Activated T-helper 1 cell treated with anti-CD3 and anti-CD28 coated beads, Interleukin-12 subunit alpha, Interleukin-12 subunit beta, Interleukin-2, Interleukin-4 antibody, amounts not matched to agents 30 ng/mL and 10 ng/mL and 1 ng/mL, durations not matched to agents 14 hours and 24 hours and 36 hours (primary cell): ENCODE measurements at regions of chr19 and their contacts with region 1.

Region 1: GRCh38 chr19:17747205-17748098 is 3.8 kb upstream of the FCHO1 start:
- DNase-seq: peak; percentile 93
- H3K4me3 Mint-ChIP-seq: peak overlapping the region; percentile 97
- H3K27ac Mint-ChIP-seq: peak overlapping the region; percentile 71
- H3K4me1 Mint-ChIP-seq: peaks cover 49% of the 10 kb centered on the region
- H3K27me3 Mint-ChIP-seq: no peaks in the 10 kb centered on the region

Region 2: GRCh38 chr19:17511724-17512573 is 235.5 kb before region 1 on chr19:
- intact Hi-C with region 1: loop called (anchors 1 kb)
- DNase-seq: peak; percentile 75
- H3K4me3 Mint-ChIP-seq: peak overlapping the region; percentile 99
- H3K27ac Mint-ChIP-seq: peak overlapping the region; percentile 79
- H3K4me1 Mint-ChIP-seq: peaks cover 28% of the 10 kb centered on the region
- H3K27me3 Mint-ChIP-seq: no peaks in the 10 kb centered on the region

Region 3: GRCh38 chr19:17555480-17555928 is 191.9 kb before region 1 on chr19 and contains the start of gene COLGALT1:
- intact Hi-C with region 1: loop called (anchors 1 kb)
- DNase-seq: peak; percentile 97
- H3K4me3 Mint-ChIP-seq: peak within 1 kb of the TSS; percentile 86
- H3K27ac Mint-ChIP-seq: peak within 1 kb of the TSS; percentile 70
- H3K4me1 Mint-ChIP-seq: peaks cover 15% of the 10 kb centered on the region
- H3K27me3 Mint-ChIP-seq: no peaks in the 10 kb centered on the region
- total RNA-seq, gene COLGALT1: 115 and 117 TPM in 2 replicates

Region 4: DNA sequence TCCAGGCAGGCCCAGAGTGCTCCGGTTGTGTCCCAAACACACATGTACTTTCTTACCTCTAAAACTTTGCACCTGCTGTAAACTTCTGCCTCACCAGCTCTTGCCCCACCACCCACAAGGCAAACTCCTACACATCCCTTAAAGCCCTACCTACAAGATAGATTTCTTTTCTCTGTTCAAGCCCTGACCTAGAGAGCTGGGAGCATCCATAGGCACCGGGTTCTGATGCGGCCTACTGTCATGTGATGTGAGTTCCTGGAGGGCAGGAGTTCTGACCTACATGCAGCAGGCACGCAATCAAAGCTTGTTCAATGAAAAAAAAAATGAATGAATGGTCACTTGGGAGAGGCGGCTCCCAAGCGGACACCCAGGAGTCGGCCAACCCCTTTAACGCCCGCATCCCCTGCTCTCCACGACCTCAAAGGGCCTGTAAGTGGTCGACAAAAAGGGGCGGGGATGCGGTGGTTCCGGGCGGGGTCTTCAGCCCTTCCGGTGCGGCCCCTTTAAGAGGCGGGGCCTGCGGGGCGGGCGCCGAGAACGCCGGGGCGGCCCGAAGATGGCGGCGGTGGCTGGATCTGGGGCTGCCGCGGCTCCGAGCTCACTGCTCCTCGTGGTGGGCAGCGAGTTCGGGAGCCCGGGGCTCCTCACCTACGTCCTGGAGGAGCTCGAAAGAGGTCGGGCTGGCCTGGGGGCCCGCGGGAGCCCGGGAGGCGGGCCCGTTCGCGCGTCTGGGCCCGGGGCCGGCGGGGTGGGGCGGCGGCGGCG is 28.3 kb before region 1 on chr19 and contains the start of gene MAP1S:
- intact Hi-C with region 1: loop called (anchors 1 kb)
- DNase-seq: peak; percentile 66
- H3K4me3 Mint-ChIP-seq: peak within 1 kb of the TSS; percentile 91
- H3K27ac Mint-ChIP-seq: peak within 1 kb of the TSS; percentile 89
- H3K4me1 Mint-ChIP-seq: peaks cover 43% of the 10 kb centered on the region
- H3K27me3 Mint-ChIP-seq: peaks cover 2% of the 10 kb centered on the region
- total RNA-seq, gene MAP1S: 81.7 and 83.7 TPM in 2 replicates

Region 5: GRCh38 chr19:17932485-17933338 is 185.3 kb after region 1 on chr19 and contains the start of gene CCDC124:
- intact Hi-C with region 1: loop called (anchors 1 kb)
- DNase-seq: peak; percentile 89
- H3K4me3 Mint-ChIP-seq: peak within 1 kb of the TSS; percentile 87
- H3K27ac Mint-ChIP-seq: peak within 1 kb of the TSS; percentile 82
- H3K4me1 Mint-ChIP-seq: peaks cover 21% of the 10 kb centered on the region
- H3K27me3 Mint-ChIP-seq: no peaks in the 10 kb centered on the region
- total RNA-seq, gene CCDC124: 122 and 128 TPM in 2 replicates

Region 6: GRCh38 chr19:18224525-18225354 is 477.3 kb after region 1 on chr19:
- intact Hi-C with region 1: no loop called
- DNase-seq: peak; percentile 86
- H3K4me3 Mint-ChIP-seq: peak overlapping the region; percentile 87
- H3K27ac Mint-ChIP-seq: peak overlapping the region; percentile 76
- H3K4me1 Mint-ChIP-seq: peaks cover 9% of the 10 kb centered on the region
- H3K27me3 Mint-ChIP-seq: peaks cover 52% of the 10 kb centered on the region